ENCODE measurements at regions of chr13 and their contacts with region 1.

Region 1: DNA sequence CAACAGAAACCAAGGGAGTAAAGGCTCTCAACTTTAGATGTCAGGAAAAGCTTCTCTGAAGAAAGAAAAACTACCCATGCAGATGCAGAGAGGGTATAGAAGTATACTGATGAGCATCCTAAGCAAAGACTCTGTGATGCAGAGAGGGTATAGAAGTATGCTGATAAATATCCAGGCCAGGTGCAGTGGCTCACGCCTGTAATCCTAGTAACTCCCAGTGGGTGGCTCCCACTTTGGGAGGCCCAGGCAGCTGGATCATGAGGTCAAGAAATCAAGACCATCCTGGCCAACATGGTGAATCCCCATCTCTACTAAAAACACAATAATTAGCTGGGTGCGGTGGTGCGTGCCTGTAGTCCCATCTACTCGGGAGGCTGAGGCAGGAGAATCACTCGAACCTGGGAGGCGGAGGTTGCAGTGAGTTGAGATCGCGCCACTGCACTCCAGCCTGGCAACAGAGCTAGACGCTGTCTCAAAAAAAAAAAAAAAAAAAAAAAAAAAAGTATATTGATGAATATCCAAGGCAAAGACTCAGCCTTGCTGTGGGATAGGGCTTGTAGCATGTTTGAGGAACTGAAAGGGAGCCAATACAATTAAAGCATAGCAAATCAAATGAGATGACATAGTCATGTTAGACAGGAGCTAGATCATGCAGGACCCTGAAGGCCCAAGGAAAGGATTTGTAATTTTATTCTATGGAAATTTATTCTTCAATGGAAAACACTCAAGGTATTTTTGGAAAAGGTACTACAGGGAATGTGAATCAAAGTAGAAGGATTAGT is 14.9 kb downstream of the UBL3 start:
- DNase-seq: no peak
- ATAC-seq: no peak
- H3K4me3 ChIP-seq: no peak overlapping the region
- H3K27ac ChIP-seq: no peak overlapping the region
- H3K4me1 ChIP-seq: peaks cover 0 to 42% (median 17%) of the 10 kb centered on the region in 9 donors
- H3K27me3 ChIP-seq: no peaks in the 10 kb centered on the region
- CTCF ChIP-seq: no peak

Region 2: DNA sequence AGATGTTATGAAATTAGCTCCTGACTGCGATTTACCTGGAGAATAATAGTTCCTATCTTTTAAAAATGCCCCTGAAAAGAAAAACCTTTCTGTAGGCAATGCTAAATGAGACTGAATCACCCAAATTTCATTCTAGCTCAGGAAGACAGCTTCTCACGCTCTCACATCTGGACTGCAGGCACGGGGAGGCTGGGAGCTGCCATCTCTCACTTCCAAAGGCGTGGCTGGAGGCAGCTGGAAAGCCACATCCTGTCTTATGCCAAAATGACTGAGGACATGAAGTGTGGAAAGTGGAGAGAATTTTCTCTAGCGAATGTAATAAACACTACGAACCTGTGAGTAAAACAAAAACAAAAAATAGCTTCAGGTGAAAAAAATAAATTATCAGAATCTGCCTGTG is 72.9 kb after region 1 on chr13:
- intact Hi-C with region 1: loop called in 1 of 10 experiments (anchors 2 kb)
- DNase-seq: peak in 1 of 2 donors; percentile 30
- ATAC-seq: peak in 3 of 8 donors; percentile 54 to 68 (median 65)
- H3K4me3 ChIP-seq: no peak overlapping the region
- H3K27ac ChIP-seq: no peak overlapping the region
- H3K4me1 ChIP-seq: peaks cover 0 to 7% (median 0%) of the 10 kb centered on the region in 9 donors
- H3K27me3 ChIP-seq: peaks cover 0 to 9% (median 0%) of the 10 kb centered on the region in 7 donors
- CTCF ChIP-seq: no peak

Measured in heart right ventricle (tissue), 16 donors.